Calu3 (cell line): ENCODE measurements at regions of chr4 and their contacts with region 1.

Region 1: DNA sequence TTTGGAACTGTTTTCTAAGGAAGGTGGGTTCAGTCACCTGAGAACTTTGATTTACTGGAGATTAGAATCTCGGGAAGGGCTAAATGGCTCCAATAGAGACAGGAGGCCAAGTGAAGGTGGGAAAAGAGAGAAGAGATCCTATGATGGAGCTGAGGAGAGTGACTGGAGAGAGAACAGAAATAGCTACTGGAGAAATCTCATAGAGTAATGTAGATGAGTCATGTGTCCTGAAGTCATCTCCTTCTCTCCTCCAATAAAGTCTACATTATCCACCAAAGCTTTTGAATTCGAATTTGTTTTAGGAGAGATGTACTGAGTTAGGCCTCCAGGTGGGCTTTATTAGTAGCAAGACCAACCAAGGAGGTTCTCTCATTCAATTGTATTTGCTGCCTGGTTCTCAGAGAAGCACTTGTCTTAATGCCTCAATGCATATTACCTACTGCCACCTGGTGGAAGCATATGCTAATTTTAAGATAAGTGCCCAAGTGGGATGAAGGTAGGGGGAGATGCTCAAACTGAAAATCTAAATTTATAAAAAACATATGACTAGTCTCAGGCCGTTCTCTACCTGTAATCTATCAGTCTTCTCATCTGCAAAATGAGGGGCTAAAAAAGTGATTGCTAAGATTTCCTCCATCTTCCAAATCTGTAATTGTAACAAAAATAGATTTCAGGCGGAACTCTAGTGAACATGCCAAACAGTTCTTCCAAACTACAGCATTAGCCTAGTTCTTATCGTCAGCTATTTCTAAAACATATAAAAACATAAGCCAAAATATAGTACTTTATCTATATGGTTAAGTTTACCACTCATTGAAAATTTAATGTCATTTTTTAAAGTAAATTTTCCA is 24.4 kb downstream of the TXK start:
- DNase-seq: peak; percentile 41
- H3K4me3 Mint-ChIP-seq: no peak overlapping the region
- H3K27ac Mint-ChIP-seq: peak overlapping the region; percentile 78
- H3K4me1 Mint-ChIP-seq: peaks cover 26% of the 10 kb centered on the region
- H3K27me3 Mint-ChIP-seq: no peaks in the 10 kb centered on the region
- CTCF ChIP-seq: peak; percentile 43

Region 2: DNA sequence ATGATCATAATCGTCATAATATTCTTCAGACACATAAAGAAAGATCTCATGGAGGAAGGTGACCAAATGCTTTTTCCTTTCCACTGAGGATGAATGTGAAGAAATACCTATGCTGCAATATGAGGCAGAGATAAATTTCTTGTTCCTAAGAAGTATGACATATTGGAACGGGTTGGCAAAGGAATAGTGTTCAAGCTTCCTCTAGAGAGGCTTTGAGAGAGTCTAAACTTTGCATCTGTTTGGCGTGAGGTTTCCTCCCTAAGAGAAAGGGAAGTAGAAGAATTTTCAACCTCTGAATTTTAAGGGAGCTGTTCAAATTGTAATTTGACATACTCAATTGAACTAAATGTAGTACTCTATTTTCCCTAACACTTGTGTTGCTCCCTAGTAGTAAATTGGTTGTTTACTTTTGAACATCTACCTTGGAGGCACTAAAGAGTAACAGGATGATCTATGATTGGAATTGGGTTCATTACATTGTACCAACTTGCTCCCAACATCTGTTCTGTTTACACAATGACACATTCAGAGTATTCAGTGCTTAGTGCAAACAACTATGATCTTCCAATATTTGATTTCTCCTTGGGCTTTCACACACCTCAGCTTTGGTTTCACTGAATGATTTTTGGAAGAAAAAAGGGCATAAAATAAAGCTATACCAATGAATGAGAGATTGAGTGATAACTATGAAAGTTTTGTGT is 393.8 kb before region 1 on chr4:
- CTCF ChIA-PET with region 1: no interaction called
- intact Hi-C with region 1: no loop called
- DNase-seq: no peak
- H3K4me3 Mint-ChIP-seq: no peak overlapping the region
- H3K27ac Mint-ChIP-seq: no peak overlapping the region
- H3K4me1 Mint-ChIP-seq: no peaks in the 10 kb centered on the region
- H3K27me3 Mint-ChIP-seq: peaks cover 5% of the 10 kb centered on the region
- CTCF ChIP-seq: no peak

Region 3: DNA sequence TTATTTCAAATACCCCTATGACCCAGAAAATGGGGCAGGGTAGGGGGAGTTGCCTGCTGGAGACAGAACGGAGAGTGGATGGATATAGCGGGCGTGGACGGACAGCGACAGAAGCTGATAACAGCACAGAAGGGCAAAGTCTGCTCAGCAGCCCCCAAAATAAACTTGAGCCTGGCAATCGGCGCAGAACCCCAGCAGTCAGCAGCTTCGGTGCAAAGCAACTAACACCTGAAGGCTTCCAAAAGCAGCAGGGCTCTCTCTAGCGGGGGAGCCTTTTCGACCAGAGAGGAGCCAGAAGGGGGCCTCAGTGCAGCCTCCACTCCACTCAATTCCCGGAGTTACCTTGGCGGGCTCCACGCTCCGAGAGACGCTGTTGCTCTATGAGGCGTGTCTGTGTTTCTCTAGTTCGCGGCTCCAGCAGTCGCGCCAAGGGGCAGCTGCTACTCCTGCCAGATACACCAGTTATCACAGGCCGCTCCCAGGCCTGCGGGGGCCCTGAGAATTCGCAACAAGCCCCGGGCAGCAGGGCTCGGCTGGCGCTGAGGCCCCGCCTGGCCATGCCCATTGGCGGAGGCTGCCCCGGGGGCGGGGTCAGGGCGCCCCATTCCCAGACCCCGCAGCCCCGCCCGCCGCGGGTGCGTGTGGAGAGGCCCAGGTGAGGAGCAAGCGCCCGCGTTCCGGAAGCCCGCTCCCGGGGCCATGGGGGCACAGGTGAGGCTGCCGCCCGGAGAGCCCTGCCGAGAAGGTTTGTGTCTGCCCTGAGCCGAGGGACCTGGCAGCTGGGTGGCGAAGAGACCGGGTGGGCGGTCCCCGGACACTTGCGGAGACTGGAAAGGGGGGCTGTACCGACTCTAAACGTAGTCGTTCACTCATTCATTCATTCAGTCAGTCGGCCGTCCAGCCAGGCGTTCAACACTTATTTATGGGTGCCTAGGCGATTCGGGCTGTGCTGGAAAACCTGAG is 93.2 kb before region 1 on chr4 and contains the starts of genes CNGA1 and NIPAL1:
- CTCF ChIA-PET with region 1: no interaction called
- intact Hi-C with region 1: loop called (anchors 1 kb)
- DNase-seq: peak; percentile 93
- H3K4me3 Mint-ChIP-seq: peak within 1 kb of the TSS; percentile 89
- H3K27ac Mint-ChIP-seq: peak within 1 kb of the TSS; percentile 78
- H3K4me1 Mint-ChIP-seq: peaks cover 14% of the 10 kb centered on the region
- H3K27me3 Mint-ChIP-seq: no peaks in the 10 kb centered on the region
- CTCF ChIP-seq: no peak
- total RNA-seq, gene CNGA1: 2.2 and 2.4 TPM in 2 replicates
- total RNA-seq, gene NIPAL1: 17.0 and 21.0 TPM in 2 replicates

Region 4: DNA sequence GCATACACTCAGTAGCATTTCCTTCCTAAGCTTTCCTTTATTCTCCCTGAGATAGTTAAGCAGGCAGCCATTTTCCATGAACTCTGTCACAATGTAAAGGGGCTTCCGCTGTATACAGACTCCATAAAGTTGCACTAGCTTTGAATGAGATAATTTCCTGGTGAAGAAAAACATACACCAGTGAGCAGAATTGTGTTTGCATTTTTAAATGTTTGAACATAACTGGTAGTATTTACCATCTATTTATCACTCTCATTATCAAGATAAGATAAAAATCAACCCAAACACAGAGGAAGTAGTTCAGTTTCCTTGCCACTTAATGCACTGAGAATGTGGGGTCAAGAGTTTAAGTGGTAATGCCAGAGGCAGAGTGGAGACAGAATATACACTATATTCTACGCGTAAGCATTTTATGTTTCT is 29.7 kb before region 1 on chr4:
- CTCF ChIA-PET with region 1: no interaction called
- intact Hi-C with region 1: loop called (anchors 2 kb)
- DNase-seq: peak; percentile 45
- H3K4me3 Mint-ChIP-seq: peak overlapping the region; percentile 66
- H3K27ac Mint-ChIP-seq: peak overlapping the region; percentile 97
- H3K4me1 Mint-ChIP-seq: peaks cover 70% of the 10 kb centered on the region
- H3K27me3 Mint-ChIP-seq: no peaks in the 10 kb centered on the region
- CTCF ChIP-seq: no peak

Region 5: DNA sequence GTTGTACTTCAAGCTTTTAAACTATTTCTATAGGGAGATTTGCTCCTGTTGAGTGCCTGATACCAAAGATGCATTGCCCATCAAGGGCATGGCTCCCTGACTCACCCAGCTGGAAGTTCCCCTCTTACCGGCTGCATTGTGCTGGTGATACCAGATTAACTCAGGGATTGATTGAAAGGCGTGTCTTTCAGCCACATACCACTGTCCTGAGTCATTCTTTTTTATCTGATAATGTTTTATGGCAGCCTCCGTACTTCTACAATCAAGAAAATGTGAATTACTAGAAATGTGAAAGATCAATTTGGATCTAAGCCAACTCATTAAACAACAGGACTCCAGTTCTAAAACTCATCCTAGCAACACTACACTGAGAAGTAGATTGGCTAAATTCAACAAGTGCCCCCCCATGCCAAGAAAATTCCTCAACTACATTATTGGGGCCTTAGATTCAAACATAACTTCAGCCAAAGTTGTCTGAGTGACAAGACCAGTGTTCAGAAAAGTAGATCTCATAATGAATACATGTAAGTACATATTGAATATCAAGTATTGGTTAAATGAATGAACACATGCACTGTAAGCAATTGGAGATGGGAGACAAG is 15.6 kb before region 1 on chr4:
- CTCF ChIA-PET with region 1: no interaction called
- intact Hi-C with region 1: loop called (anchors 2 kb)
- DNase-seq: peak; percentile 71
- H3K4me3 Mint-ChIP-seq: no peak overlapping the region
- H3K27ac Mint-ChIP-seq: peak overlapping the region; percentile 75
- H3K4me1 Mint-ChIP-seq: peaks cover 9% of the 10 kb centered on the region
- H3K27me3 Mint-ChIP-seq: no peaks in the 10 kb centered on the region
- CTCF ChIP-seq: no peak

Region 6: DNA sequence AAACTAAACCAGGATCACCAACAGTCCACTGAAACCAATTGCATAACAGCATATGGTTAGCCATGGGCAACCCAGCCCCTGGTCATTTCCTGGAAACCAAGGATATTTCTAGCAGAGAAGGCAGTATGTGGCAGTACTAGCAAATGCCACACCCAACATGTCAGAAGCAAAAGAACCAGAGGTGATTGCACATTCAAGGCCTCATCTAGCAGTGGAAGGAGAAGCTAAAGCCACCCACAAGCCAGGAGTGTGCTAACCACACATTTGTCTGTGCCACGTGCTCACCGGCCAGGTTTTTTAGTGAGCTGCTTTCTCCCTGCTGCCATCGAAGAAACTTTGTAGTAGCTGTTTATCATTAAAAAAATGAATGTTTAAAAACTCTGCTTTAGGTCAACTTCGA is 118.0 kb after region 1 on chr4:
- CTCF ChIA-PET with region 1: no interaction called
- intact Hi-C with region 1: no loop called
- DNase-seq: no peak
- H3K4me3 Mint-ChIP-seq: no peak overlapping the region
- H3K27ac Mint-ChIP-seq: no peak overlapping the region
- H3K4me1 Mint-ChIP-seq: peaks cover 9% of the 10 kb centered on the region
- H3K27me3 Mint-ChIP-seq: no peaks in the 10 kb centered on the region
- CTCF ChIP-seq: no peak